ENCODE measurements at regions of chr17 and their contacts with region 1.

Region 1: DNA sequence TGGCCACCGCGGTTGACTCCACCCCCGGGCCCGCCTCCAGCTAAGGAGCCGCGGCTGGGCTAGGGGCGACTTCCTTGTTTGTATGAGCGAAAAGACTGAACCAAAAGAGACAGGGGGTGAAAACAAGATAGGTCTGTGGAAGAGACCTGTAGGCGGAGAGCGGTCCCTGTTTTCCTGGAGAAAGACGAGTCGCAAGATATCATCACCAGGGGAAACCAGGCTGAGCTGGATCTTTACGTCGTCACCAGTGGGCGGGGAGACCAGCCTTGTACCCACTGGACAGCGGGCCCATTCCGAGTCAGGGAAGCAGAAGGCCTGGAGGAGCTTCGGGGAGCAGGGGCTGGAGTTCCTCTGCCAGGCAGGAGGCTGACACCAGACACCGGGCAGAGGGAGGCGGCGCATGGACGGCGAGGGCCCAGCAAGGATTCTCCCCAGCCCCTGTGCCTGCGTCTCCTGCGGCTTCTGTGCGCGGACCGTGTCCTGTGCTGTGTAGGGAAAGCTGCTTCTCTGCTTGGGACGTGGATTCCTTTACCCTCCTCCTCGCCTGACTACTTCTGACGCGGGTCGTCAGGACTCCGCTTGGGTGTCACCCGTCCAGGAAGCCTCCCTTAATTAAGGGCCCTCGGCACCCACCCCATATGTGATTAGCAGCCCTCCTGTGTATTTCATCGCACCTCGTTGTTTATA is 10.3 kb upstream of the ARL4D start:
- DNase-seq: peak; percentile 81 to 98 (median 90)

Region 2: GRCh38 chr17:43367737-43368242 is 20.7 kb before region 1 on chr17:
- intact Hi-C with region 1: loop called (anchors 2 kb)
- DNase-seq: no peak

Region 3: DNA sequence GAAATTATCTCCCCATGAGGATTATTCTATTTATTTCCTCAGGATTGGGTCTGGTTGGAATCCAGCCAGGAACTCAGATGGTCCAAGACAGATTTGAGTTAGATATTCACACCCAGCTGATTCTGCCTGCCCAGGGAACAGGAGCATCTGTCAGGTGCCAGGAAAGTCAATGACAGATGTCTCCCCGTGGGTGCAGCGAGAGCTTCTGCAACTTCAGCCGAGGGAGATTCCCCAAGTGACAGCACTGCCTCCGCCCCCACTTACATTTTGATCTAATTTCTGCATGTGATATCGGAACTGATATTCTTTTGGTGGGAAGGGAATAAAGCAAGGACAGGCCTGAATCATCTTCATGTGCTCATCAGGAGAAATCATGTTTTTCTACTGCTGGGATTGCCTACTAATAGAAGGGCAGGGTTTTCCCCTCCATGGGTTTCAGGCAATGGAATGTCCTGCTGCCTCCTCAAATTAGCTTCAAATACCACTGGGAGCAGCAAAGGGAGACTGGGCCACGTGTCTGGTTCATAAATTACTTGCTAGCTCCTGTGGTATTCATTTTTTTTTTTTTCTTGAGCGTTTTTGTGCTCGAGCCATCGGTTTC is 79.6 kb after region 1 on chr17:
- intact Hi-C with region 1: no loop called
- DNase-seq: peak in 7 of 10 donors; percentile 23 to 90 (median 48)

Measured in posterior cingulate gyrus (tissue), 11 donors.